ENCODE measurements at regions of chr16 and their contacts with region 1.

Region 1: DNA sequence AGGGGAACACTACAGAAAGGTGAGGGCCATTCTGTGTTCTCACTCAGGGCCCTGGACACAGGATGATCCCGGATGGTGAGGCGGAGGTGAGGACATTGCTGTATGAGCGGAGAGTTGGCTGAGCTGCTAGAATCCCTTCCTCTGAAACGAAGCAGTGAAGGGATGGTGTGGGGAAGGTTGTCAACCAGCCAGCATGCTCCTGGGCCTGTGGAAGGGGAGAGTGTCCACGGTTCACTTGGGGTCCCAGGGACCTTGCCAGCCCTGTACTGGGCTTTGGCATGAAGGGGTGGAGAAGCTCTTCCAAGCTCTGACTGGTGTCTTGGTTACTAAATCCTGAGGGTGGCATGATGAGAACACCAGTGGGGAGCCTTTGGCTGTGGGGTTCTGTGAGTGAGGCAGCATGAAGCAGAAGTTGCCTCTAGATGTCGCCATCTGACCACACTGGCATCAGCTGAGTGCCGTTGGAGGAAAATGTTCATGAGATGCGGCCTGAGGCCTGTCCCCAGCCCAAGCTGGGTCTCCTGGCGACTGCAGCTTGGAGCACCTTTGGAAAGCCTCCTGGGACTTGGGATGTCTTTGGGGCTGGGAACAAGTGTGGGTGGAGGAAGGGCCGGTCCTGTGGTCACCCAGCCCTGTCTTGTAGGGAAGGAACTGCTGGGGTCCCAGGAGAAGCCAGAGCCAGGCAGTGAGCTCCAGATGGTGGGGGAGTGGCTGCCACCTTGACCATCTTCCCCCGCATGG is 14.8 kb downstream of the PDP2 start:
- DNase-seq: peak; percentile 49 to 64 (median 59)
- H3K4me3 ChIP-seq: no peak overlapping the region
- H3K4me3 Mint-ChIP-seq: no peak overlapping the region
- H3K27ac ChIP-seq: no peak overlapping the region
- H3K27ac Mint-ChIP-seq: no peak overlapping the region
- H3K4me1 ChIP-seq: no peaks in the 10 kb centered on the region
- H3K4me1 Mint-ChIP-seq: peaks cover 4% of the 10 kb centered on the region
- H3K27me3 ChIP-seq: no peaks in the 10 kb centered on the region
- H3K27me3 Mint-ChIP-seq: peaks cover 7 to 9% (median 8%) of the 10 kb centered on the region in 3 donors
- CTCF ChIP-seq: peak; percentile 82

Region 2: DNA sequence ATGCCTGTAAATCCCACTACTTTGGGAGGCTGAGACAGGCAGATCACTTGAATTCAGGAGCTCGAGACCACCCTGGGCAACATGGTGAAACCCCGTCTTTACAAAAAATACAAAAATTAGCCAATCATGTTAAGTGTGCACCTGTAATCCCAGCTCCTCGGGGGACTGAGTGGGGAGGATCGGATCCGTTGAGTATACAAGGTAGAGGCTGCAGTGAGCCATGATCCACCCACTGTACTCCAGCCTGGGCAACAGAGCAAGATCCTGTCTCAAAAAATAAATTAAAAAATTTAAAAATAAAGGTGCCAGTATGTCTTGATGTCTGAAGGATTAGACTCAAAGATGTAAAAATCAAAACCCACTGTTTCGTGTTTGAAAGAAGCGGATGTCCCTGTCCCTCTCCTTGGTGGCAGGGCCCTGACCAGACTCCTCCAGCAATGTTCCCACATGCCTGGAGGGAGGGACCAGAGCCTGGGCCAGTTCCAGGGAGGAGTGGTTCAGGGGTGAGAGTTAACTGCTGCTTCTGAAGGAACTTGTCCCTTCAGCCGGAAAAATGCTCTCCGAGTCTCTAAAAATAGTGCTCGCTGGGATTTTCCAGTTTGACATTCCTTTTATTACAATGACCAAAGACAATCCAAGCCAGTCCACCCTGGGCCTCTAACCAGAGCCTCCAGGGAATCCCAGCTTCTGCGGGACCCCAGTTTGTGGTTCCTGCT is 189.2 kb before region 1 on chr16:
- intact Hi-C with region 1: no loop called
- DNase-seq: no peak
- H3K4me3 ChIP-seq: no peak overlapping the region
- H3K4me3 Mint-ChIP-seq: no peak overlapping the region
- H3K27ac ChIP-seq: no peak overlapping the region
- H3K27ac Mint-ChIP-seq: no peak overlapping the region
- H3K4me1 ChIP-seq: peaks cover 32 to 35% of the 10 kb centered on the region in 2 donors
- H3K4me1 Mint-ChIP-seq: peaks cover 35% of the 10 kb centered on the region
- H3K27me3 ChIP-seq: no peaks in the 10 kb centered on the region
- H3K27me3 Mint-ChIP-seq: peaks cover 2 to 5% (median 2%) of the 10 kb centered on the region in 3 donors
- CTCF ChIP-seq: no peak

Region 3: GRCh38 chr16:66774981-66775380 is 120.1 kb before region 1 on chr16:
- intact Hi-C with region 1: no loop called
- DNase-seq: no peak
- H3K4me3 ChIP-seq: no peak overlapping the region
- H3K4me3 Mint-ChIP-seq: no peak overlapping the region
- H3K27ac ChIP-seq: no peak overlapping the region
- H3K27ac Mint-ChIP-seq: no peak overlapping the region
- H3K4me1 ChIP-seq: no peaks in the 10 kb centered on the region
- H3K4me1 Mint-ChIP-seq: no peaks in the 10 kb centered on the region
- H3K27me3 ChIP-seq: no peaks in the 10 kb centered on the region
- H3K27me3 Mint-ChIP-seq: no peaks in the 10 kb centered on the region
- CTCF ChIP-seq: no peak

Region 4: GRCh38 chr16:66850115-66850815 is 44.9 kb before region 1 on chr16:
- intact Hi-C with region 1: no loop called
- DNase-seq: peak in 1 of 3 donors; percentile 24
- H3K4me3 ChIP-seq: no peak overlapping the region
- H3K4me3 Mint-ChIP-seq: no peak overlapping the region
- H3K27ac ChIP-seq: no peak overlapping the region
- H3K27ac Mint-ChIP-seq: no peak overlapping the region
- H3K4me1 ChIP-seq: peaks cover 7 to 11% of the 10 kb centered on the region in 2 donors
- H3K4me1 Mint-ChIP-seq: peaks cover 16% of the 10 kb centered on the region
- H3K27me3 ChIP-seq: peaks cover 11 to 45% of the 10 kb centered on the region in 2 donors
- H3K27me3 Mint-ChIP-seq: peaks cover 46 to 88% (median 55%) of the 10 kb centered on the region in 3 donors
- CTCF ChIP-seq: no peak

Region 5: DNA sequence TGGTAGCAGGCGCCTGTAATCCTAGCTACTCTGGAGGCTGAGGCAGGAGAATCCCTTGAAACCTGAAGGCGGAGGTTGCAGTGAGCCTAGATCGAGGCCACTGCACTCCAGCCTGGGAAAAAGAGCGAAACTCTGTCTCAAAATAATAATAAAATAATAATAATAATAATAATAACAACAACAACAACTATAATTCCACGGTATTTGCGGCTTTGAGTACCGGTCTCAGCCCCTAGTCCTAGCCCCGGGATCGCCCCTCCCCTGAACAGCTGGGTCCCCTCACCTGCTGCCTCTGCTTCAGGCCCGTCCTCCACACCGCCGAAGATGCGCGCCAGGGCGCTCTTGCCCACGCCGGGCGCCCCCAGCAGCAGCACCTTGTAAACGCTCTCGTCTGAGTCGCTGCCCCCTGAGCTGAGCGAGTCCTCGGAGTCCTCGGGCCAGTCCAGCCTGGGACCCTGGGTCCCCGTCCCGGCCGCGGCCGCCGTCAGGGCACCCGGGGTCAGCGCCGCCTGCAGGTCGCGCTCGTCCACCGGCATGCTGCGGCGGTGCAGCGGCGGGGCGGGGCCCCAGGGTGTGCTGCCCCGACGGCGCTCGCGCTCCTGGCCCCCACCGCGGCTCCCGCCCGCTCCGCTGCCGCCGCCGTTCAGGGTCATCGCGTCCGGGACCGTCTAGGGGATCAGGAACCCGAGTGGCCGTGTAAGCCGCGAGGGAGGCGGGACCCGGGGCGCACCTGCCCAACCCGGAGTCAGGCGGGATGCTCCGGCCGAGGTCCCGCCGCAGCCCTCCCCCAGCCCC is 29.6 kb after region 1 on chr16:
- intact Hi-C with region 1: loop called in 1 of 2 experiments (anchors 2 kb)
- DNase-seq: peak; percentile 27 to 46 (median 40)
- H3K4me3 ChIP-seq: peak overlapping the region in 2 of 3 experiments; percentile 1 to 67
- H3K4me3 Mint-ChIP-seq: peak overlapping the region; percentile 73 to 92
- H3K27ac ChIP-seq: no peak overlapping the region
- H3K27ac Mint-ChIP-seq: peak overlapping the region in 1 of 7 donors; percentile 49
- H3K4me1 ChIP-seq: peaks cover 20 to 24% of the 10 kb centered on the region in 2 donors
- H3K4me1 Mint-ChIP-seq: peaks cover 28% of the 10 kb centered on the region
- H3K27me3 ChIP-seq: peaks cover 17 to 67% of the 10 kb centered on the region in 2 donors
- H3K27me3 Mint-ChIP-seq: peaks cover 56 to 75% (median 58%) of the 10 kb centered on the region in 3 donors
- CTCF ChIP-seq: peak; percentile 66

Region 6: GRCh38 chr16:66934153-66934838 is 39.2 kb after region 1 on chr16 and contains the start of gene CIAO2B:
- intact Hi-C with region 1: loop called in 1 of 2 experiments (anchors 5 kb)
- DNase-seq: peak; percentile 81 to 86 (median 84)
- H3K4me3 ChIP-seq: peak within 1 kb of the TSS; percentile 50 to 100 (median 74)
- H3K4me3 Mint-ChIP-seq: peak within 1 kb of the TSS; percentile 96 to 97
- H3K27ac ChIP-seq: peak within 1 kb of the TSS; percentile 60 to 93
- H3K27ac Mint-ChIP-seq: peak within 1 kb of the TSS; percentile 91 to 97 (median 94)
- H3K4me1 ChIP-seq: peaks cover 24 to 38% of the 10 kb centered on the region in 2 donors
- H3K4me1 Mint-ChIP-seq: peaks cover 51% of the 10 kb centered on the region
- H3K27me3 ChIP-seq: no peaks in the 10 kb centered on the region
- H3K27me3 Mint-ChIP-seq: peaks cover 0 to 2% (median 1%) of the 10 kb centered on the region in 3 donors
- CTCF ChIP-seq: no peak
- polyA plus RNA-seq, gene CIAO2B: 121 to 140 (median 132) TPM